ENCODE measurements at regions of chr19 and their contacts with region 1.

Region 1: GRCh38 chr19:42634409-42635232 is 39.9 kb upstream of the CEACAM8 start:
- DNase-seq: peak; percentile 64
- ATAC-seq: peak; percentile 65
- H3K4me3 Mint-ChIP-seq: no peak overlapping the region
- H3K27ac Mint-ChIP-seq: no peak overlapping the region
- H3K4me1 Mint-ChIP-seq: no peaks in the 10 kb centered on the region
- H3K27me3 Mint-ChIP-seq: peaks cover 14% of the 10 kb centered on the region
- CTCF ChIP-seq: peak; percentile 52; the same call in 1 of the 2 replicates

Region 2: DNA sequence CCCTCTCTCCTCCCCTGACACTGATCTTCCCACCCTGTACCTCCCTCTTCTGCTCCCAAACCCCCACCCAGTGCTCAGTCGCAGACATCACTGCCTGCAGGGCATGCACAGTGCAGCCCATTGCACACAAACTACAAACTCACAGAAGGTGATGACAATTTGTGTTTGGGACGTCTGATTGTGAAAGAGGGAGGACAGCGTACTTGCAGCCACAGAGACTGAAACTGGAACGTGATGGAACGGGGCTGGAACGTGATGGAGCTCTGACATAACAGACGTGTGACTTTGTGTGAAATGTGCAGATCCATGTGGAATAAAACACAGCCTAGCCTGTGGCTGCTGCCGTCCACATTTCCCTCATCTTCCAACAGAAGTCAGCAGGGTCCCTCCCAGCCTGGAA is 17.4 kb after region 1 on chr19:
- CTCF ChIA-PET with region 1: interaction called, 14 read pairs
- POLR2A ChIA-PET with region 1: no interaction called
- DNase-seq: no peak
- ATAC-seq: no peak
- H3K4me3 Mint-ChIP-seq: no peak overlapping the region
- H3K27ac Mint-ChIP-seq: no peak overlapping the region
- H3K4me1 Mint-ChIP-seq: 0 out of 2 replicates have a peak, but pooled peaks cover 3% of the 10 kb centered on the region
- H3K27me3 Mint-ChIP-seq: peaks cover 9% of the 10 kb centered on the region
- CTCF ChIP-seq: no peak